ENCODE measurements at regions of chr7 and their contacts with region 1.

Region 1: GRCh38 chr7:151028131-151028947 is at the start of gene ABCB8:
- DNase-seq: peak; percentile 99
- H3K4me3 ChIP-seq: peak within 1 kb of the TSS; percentile 66 to 88 (median 83)
- H3K27ac ChIP-seq: peak within 1 kb of the TSS; percentile 57
- H3K4me1 ChIP-seq: peaks cover 13% of the 10 kb centered on the region
- H3K27me3 ChIP-seq: no peaks in the 10 kb centered on the region
- CTCF ChIP-seq: peak; percentile 32 to 49
- POLR2A ChIP-seq: peak; percentile 73
- total RNA-seq, gene ABCB8: 46.3 and 48.5 TPM in 2 replicates

Region 2: DNA sequence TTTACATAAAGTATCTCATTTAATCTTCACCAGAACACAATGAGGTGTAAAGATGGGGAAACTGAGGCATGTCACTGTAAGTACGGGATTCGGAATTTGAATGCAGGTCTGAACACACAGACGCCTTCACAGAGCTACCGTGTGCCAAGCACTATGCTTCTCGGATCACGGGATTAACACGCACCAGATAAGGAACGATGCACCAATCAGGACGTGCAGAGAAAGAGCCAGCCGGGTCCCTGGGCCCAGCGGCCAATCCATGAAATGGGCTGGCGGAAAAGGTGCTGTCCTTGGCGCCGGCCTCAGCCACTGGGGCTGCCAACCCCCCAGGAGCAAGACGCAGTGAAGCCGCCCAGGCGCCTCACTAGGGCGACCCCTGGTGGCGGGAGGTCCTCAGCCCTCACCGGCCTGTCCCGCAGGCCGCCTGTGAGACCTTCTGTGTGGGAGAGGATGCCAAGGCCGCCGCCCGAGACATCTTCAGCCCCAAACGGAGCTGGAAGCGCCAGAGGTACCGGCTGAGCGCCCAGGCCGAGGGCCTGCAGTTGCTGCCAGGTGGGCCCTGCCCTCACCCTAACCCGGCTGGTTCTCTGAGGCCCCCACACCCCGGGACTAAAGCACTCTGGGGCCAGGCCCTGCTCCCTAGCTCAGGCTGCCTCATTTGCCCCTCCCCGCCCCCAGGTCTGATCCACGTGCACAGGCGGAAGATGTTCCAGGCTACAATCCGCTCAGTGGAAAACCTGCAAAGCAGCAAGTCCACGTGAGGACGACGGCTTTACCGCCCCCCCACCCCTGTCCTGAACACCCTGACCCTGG is 19.6 kb before region 1 on chr7:
- CTCF ChIA-PET with region 1: interaction called, 107 read pairs
- POLR2A ChIA-PET with region 1: no interaction called
- dilution Hi-C with region 1: no loop called
- intact Hi-C with region 1: loop called (anchors 1 kb)
- DNase-seq: peak; percentile 62
- H3K4me3 ChIP-seq: no peak overlapping the region
- H3K27ac ChIP-seq: peak overlapping the region; percentile 23
- H3K4me1 ChIP-seq: peaks cover 44% of the 10 kb centered on the region
- H3K27me3 ChIP-seq: no peaks in the 10 kb centered on the region
- CTCF ChIP-seq: peak; percentile 96 to 98
- POLR2A ChIP-seq: peak; percentile 49

Region 3: GRCh38 chr7:151038951-151039849 is 10.9 kb after region 1 on chr7:
- CTCF ChIA-PET with region 1: interaction called, 5 read pairs
- POLR2A ChIA-PET with region 1: interaction called, 5 read pairs
- dilution Hi-C with region 1: no loop called
- intact Hi-C with region 1: loop called (anchors 1 kb)
- DNase-seq: peak; percentile 97
- H3K4me3 ChIP-seq: no peak overlapping the region
- H3K27ac ChIP-seq: peak overlapping the region; percentile 85
- H3K4me1 ChIP-seq: peaks cover 20% of the 10 kb centered on the region
- H3K27me3 ChIP-seq: no peaks in the 10 kb centered on the region
- CTCF ChIP-seq: no peak
- POLR2A ChIP-seq: peak; percentile 15

Region 4: GRCh38 chr7:151080522-151081169 is 52.3 kb after region 1 on chr7 and contains the start of gene FASTK:
- CTCF ChIA-PET with region 1: interaction called, 3 read pairs
- POLR2A ChIA-PET with region 1: interaction called, 4 read pairs
- dilution Hi-C with region 1: no loop called
- intact Hi-C with region 1: loop called (anchors 1 kb)
- DNase-seq: peak; percentile 91
- H3K4me3 ChIP-seq: peak within 1 kb of the TSS; percentile 29 to 75 (median 53)
- H3K27ac ChIP-seq: peak within 1 kb of the TSS; percentile 53
- H3K4me1 ChIP-seq: peaks cover 39% of the 10 kb centered on the region
- H3K27me3 ChIP-seq: no peaks in the 10 kb centered on the region
- CTCF ChIP-seq: no peak
- POLR2A ChIP-seq: peak; percentile 84
- total RNA-seq, gene FASTK: 71.6 and 73.3 TPM in 2 replicates

Region 5: DNA sequence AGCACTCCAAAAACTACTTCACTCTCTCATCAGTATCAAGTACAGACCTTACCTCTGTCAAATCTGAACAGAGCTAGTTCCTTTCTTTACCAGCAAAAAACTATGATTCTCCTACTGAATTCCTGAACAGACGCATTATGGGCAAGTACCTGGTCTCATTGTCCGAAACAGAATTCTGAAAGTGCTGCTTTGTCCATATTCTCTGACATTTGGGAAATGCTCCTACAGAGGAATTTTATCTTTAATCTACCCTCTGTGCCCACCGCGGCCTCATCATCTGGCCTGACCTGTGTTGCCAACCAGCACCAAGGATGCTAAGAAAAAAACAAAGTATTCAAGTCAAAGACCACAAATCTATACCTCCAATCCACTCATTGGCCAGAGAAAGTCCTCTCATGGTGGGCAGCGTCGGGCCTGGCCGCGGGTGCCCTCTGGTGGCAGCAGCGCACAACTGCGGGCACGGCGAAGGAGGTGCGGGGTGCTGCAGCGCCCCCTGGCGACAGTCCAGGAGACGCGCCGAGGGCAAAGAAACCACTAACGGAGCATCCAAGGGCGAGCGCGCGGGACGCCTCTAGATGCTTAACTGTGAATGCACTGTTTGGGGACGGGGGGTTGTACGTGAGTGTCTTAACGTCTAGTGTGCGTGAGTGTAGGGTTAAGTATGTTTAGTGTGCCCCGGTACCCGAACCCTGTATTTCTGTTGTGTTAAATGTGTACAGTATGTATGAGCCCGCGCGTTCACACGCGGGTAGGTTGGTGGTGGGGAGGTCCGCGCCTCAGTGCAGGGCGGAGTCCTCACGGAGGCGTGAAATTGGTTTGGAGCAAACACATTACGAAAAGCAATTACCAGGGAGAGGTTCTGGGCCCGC is 144.2 kb after region 1 on chr7:
- CTCF ChIA-PET with region 1: no interaction called
- POLR2A ChIA-PET with region 1: no interaction called
- dilution Hi-C with region 1: no loop called
- intact Hi-C with region 1: loop called (anchors 1 kb)
- DNase-seq: peak; percentile 76
- H3K4me3 ChIP-seq: no peak overlapping the region
- H3K27ac ChIP-seq: no peak overlapping the region
- H3K4me1 ChIP-seq: peaks cover 3% of the 10 kb centered on the region
- H3K27me3 ChIP-seq: peaks cover 21 to 26% of the 10 kb centered on the region in 2 experiments
- CTCF ChIP-seq: peak; percentile 100
- POLR2A ChIP-seq: no peak